Psoas muscle (tissue), 8 donors: ENCODE measurements at regions of chr4 and their contacts with region 1.

Region 1: DNA sequence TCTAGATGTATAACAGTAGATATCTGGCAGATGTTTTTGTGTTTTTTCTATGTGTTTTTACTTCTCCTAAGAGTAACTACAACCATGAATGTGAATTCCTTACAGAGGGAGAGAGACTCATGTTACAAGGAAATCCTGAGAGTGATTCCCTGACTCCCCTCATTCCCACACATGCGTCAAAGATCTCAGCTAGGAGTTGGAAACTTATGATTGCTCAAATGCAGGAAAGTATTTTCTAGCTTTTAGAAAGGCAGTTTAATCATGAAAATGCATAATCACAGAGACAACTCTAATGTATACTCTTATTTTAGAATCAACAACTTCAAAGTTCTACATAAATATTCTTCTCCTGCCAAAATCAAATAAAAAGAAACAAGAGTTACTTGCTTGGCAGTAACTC is 121.8 kb downstream of the PDE5A start:
- DNase-seq: no peak
- ATAC-seq: no peak
- H3K4me3 ChIP-seq: no peak overlapping the region
- H3K27ac ChIP-seq: no peak overlapping the region
- H3K4me1 ChIP-seq: no peaks in the 10 kb centered on the region
- H3K27me3 ChIP-seq: no peaks in the 10 kb centered on the region
- CTCF ChIP-seq: no peak

Region 2: GRCh38 chr4:118712872-118713271 is 793.9 kb before region 1 on chr4:
- intact Hi-C with region 1: loop called in 1 of 2 experiments (anchors 10 kb)
- DNase-seq: no peak
- ATAC-seq: no peak
- H3K4me3 ChIP-seq: no peak overlapping the region
- H3K27ac ChIP-seq: no peak overlapping the region
- H3K4me1 ChIP-seq: no peaks in the 10 kb centered on the region
- H3K27me3 ChIP-seq: no peaks in the 10 kb centered on the region
- CTCF ChIP-seq: no peak

Region 3: GRCh38 chr4:119268451-119268850 is 238.4 kb before region 1 on chr4:
- intact Hi-C with region 1: no loop called
- DNase-seq: no peak
- ATAC-seq: no peak
- H3K4me3 ChIP-seq: no peak overlapping the region
- H3K27ac ChIP-seq: no peak overlapping the region
- H3K4me1 ChIP-seq: peaks cover 3% of the 10 kb centered on the region
- H3K27me3 ChIP-seq: no peaks in the 10 kb centered on the region
- CTCF ChIP-seq: no peak